ENCODE measurements at regions of chr14 and their contacts with region 1.

Region 1: DNA sequence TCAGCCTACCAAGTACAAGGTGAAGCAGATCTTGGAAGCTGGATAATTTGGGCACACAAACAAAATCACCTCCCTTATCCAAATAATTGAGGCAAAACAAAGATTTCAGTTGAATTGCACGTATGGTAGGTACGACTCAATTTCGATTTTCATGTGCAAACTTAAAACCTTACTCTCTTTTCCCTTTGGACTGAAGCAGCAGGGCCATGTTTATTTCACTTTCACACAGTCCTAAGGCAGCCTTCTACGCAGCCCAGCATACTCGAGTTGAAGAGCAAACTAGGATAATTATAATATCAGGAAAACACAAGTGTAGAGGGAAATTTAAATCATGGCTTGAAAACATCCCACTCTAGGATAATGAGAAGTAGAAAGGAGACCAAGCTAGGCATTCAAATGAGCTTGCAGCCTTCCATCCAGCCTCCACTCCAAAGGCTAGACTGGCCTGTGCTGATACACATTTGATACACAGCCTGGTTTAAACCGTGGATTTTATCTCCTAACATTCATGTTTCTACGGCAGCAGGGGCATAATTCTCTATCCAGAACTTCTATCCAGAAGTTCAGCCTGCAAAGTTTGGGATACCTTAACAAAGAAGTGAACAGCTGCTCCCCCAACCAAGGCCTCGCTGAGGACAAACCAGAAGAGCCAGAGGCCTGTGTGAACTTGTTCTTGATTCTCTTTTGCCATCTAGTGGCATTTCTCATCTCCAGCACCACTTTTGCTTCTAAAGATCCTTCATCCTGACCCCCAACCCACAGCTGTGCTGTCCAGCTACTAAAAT is 2.4 kb upstream of the RNASE7 start:
- DNase-seq: peak in 1 of 2 donors; percentile 71
- ATAC-seq: peak in 2 of 3 donors; percentile 47 to 57
- H3K4me3 ChIP-seq: no peak overlapping the region
- H3K4me3 Mint-ChIP-seq: no peak overlapping the region
- H3K27ac ChIP-seq: no peak overlapping the region
- H3K27ac Mint-ChIP-seq: no peak overlapping the region
- H3K4me1 ChIP-seq: no peaks in the 10 kb centered on the region
- H3K4me1 Mint-ChIP-seq: no peaks in the 10 kb centered on the region
- H3K27me3 ChIP-seq: peaks cover 3% of the 10 kb centered on the region
- H3K27me3 Mint-ChIP-seq: peaks cover 34 to 36% of the 10 kb centered on the region in 2 donors
- CTCF ChIP-seq: no peak

Region 2: DNA sequence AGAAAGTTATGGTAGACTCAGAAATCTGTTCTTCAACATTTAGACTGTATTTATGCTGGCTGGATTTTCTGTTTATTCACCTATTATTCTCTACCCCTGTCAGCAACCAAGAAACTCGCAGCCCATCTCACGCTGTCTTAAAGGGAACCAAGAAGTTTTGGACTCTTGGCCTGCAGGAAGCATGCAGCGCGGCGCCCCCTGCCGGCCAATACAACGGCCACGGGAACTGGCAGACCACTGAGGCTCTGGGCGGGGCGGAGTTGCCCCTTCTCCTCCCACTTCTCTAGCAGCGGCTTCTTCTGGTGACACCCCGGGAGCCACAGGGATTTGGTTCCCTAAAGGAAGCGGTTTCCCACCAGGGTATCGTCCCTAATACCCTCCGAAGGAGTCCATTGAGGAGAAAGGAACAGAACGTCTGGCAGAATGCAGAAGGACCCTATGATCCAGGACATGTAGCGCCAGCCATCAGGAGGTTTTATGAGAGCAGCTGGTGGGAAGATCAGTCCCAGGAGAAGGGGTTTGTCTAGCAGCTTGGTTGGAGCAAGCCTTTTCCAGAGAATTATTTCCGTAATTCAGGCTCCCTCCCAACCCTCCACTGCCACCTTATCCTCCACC is 105.5 kb before region 1 on chr14:
- intact Hi-C with region 1: no loop called
- DNase-seq: peak; percentile 19
- ATAC-seq: no peak
- H3K4me3 ChIP-seq: no peak overlapping the region
- H3K4me3 Mint-ChIP-seq: no peak overlapping the region
- H3K27ac ChIP-seq: no peak overlapping the region
- H3K27ac Mint-ChIP-seq: no peak overlapping the region
- H3K4me1 ChIP-seq: no peaks in the 10 kb centered on the region
- H3K4me1 Mint-ChIP-seq: no peaks in the 10 kb centered on the region
- H3K27me3 ChIP-seq: no peaks in the 10 kb centered on the region
- H3K27me3 Mint-ChIP-seq: peaks cover 2 to 18% of the 10 kb centered on the region in 2 donors
- CTCF ChIP-seq: no peak

Region 3: GRCh38 chr14:21014761-21015190 is 25.0 kb before region 1 on chr14:
- intact Hi-C with region 1: loop called (anchors 1 kb)
- DNase-seq: peak; percentile 72 to 92
- ATAC-seq: peak; percentile 74 to 89 (median 87)
- H3K4me3 ChIP-seq: no peak overlapping the region
- H3K4me3 Mint-ChIP-seq: no peak overlapping the region
- H3K27ac ChIP-seq: no peak overlapping the region
- H3K27ac Mint-ChIP-seq: no peak overlapping the region
- H3K4me1 ChIP-seq: no peaks in the 10 kb centered on the region
- H3K4me1 Mint-ChIP-seq: no peaks in the 10 kb centered on the region
- H3K27me3 ChIP-seq: peaks cover 4% of the 10 kb centered on the region
- H3K27me3 Mint-ChIP-seq: peaks cover 14 to 18% of the 10 kb centered on the region in 2 donors
- CTCF ChIP-seq: peak; percentile 88